ENCODE measurements at regions of chr17 and their contacts with region 1.

Region 1: DNA sequence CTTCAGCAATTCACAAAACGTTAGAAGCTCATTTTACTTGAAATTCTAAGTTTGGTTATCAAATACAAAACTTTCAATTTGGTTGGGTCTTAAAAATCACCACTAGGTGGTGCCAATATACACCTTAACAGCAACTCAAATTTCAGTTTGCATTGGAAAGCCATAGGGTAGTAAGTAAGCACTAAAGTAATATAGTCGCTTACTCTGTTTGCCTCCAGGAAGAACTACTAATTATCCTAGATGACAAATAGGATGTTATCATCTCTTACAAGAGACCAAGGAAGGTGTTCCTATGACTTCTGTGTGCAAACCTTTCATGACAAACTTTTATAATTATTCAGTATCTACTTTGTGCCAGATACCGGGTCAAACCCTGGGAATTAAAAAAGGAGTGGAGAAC is 93.3 kb downstream of the MYO1D start:
- DNase-seq: peak; percentile 67
- ATAC-seq: peak; percentile 36
- H3K4me3 ChIP-seq: no peak overlapping the region
- H3K4me3 Mint-ChIP-seq: no peak overlapping the region
- H3K27ac ChIP-seq: no peak overlapping the region
- H3K27ac Mint-ChIP-seq: no peak overlapping the region
- H3K4me1 ChIP-seq: no peaks in the 10 kb centered on the region
- H3K4me1 Mint-ChIP-seq: no peaks in the 10 kb centered on the region
- H3K27me3 ChIP-seq: no peaks in the 10 kb centered on the region
- H3K27me3 Mint-ChIP-seq: no peaks in the 10 kb centered on the region
- CTCF ChIP-seq: peak; percentile 88

Region 2: DNA sequence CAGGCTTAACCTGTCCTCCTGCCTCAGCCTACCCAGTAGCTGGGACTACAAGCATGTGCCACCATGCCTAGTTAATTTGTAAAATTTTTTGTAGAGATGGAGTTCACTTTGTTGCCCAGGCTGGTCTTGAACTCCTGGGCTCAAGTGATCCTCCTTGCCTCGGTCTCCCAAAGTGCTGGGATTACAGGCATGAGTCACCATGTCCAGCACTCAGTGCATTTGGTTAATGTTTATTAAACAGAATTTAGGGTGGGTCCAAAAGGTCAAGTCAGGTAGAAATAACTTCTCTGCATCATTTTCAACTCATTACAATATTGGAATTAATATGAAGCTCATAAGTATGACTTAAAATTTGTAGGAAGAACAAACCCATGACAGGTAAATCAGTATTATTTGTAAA is 585.6 kb before region 1 on chr17:
- CTCF ChIA-PET with region 1: no interaction called
- POLR2A ChIA-PET with region 1: no interaction called
- intact Hi-C with region 1: no loop called
- DNase-seq: no peak
- ATAC-seq: no peak
- H3K4me3 ChIP-seq: no peak overlapping the region
- H3K4me3 Mint-ChIP-seq: no peak overlapping the region
- H3K27ac ChIP-seq: no peak overlapping the region
- H3K27ac Mint-ChIP-seq: no peak overlapping the region
- H3K4me1 ChIP-seq: no peaks in the 10 kb centered on the region
- H3K4me1 Mint-ChIP-seq: no peaks in the 10 kb centered on the region
- H3K27me3 ChIP-seq: no peaks in the 10 kb centered on the region
- H3K27me3 Mint-ChIP-seq: no peaks in the 10 kb centered on the region
- CTCF ChIP-seq: no peak

Region 3: DNA sequence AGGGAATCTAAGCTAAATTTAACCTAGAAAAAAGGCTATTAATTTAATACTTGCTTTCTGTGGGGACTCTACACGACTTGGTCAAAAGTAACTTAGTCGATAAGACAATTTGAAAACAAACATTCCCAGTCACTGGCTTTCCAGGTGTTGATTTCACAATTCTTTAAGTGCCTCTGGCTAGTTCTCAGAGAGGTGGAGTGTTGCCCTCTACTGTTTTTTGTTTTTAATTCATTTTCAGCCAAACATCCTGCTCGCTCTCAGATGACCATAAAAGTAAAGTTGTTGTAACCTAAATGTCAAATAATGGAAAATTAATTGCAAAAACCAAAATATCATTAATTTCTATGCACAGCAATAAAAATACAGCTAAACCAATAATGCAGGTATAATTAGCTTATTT is 13.8 kb before region 1 on chr17:
- CTCF ChIA-PET with region 1: interaction called, 15 read pairs
- POLR2A ChIA-PET with region 1: no interaction called
- intact Hi-C with region 1: no loop called
- DNase-seq: no peak
- ATAC-seq: no peak
- H3K4me3 ChIP-seq: no peak overlapping the region
- H3K4me3 Mint-ChIP-seq: no peak overlapping the region
- H3K27ac ChIP-seq: no peak overlapping the region
- H3K27ac Mint-ChIP-seq: no peak overlapping the region
- H3K4me1 ChIP-seq: no peaks in the 10 kb centered on the region
- H3K4me1 Mint-ChIP-seq: peaks cover 3% of the 10 kb centered on the region
- H3K27me3 ChIP-seq: no peaks in the 10 kb centered on the region
- H3K27me3 Mint-ChIP-seq: no peaks in the 10 kb centered on the region
- CTCF ChIP-seq: no peak

Region 4: GRCh38 chr17:32794533-32795246 is 11.1 kb after region 1 on chr17:
- CTCF ChIA-PET with region 1: interaction called, 19 read pairs
- POLR2A ChIA-PET with region 1: no interaction called
- intact Hi-C with region 1: no loop called
- DNase-seq: no peak
- ATAC-seq: no peak
- H3K4me3 ChIP-seq: no peak overlapping the region
- H3K4me3 Mint-ChIP-seq: no peak overlapping the region
- H3K27ac ChIP-seq: no peak overlapping the region
- H3K27ac Mint-ChIP-seq: no peak overlapping the region
- H3K4me1 ChIP-seq: no peaks in the 10 kb centered on the region
- H3K4me1 Mint-ChIP-seq: no peaks in the 10 kb centered on the region
- H3K27me3 ChIP-seq: no peaks in the 10 kb centered on the region
- H3K27me3 Mint-ChIP-seq: no peaks in the 10 kb centered on the region
- CTCF ChIP-seq: no peak

Region 5: DNA sequence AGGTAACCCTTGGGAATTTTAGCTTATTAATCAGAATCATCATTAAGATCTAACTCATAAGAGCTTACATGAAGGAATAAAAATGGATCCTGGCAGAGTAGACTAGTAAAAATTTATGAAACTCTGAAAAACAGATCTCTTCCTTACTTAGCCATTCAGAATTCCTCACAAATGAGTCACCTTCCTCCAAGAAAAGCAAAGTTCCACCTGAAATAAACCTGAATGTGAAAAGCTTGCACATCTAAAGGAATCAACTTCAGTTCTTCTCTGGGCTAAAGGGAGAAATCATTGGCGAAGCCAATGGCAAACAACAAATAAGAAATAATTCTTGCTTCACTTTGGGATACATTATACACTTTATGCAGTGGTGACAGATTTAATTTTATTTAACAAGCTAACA is 70.6 kb after region 1 on chr17:
- CTCF ChIA-PET with region 1: interaction called, 19 read pairs
- POLR2A ChIA-PET with region 1: no interaction called
- intact Hi-C with region 1: no loop called
- DNase-seq: no peak
- ATAC-seq: no peak
- H3K4me3 ChIP-seq: no peak overlapping the region
- H3K4me3 Mint-ChIP-seq: no peak overlapping the region
- H3K27ac ChIP-seq: no peak overlapping the region
- H3K27ac Mint-ChIP-seq: no peak overlapping the region
- H3K4me1 ChIP-seq: no peaks in the 10 kb centered on the region
- H3K4me1 Mint-ChIP-seq: no peaks in the 10 kb centered on the region
- H3K27me3 ChIP-seq: no peaks in the 10 kb centered on the region
- H3K27me3 Mint-ChIP-seq: peaks cover 2% of the 10 kb centered on the region
- CTCF ChIP-seq: no peak

Region 6: DNA sequence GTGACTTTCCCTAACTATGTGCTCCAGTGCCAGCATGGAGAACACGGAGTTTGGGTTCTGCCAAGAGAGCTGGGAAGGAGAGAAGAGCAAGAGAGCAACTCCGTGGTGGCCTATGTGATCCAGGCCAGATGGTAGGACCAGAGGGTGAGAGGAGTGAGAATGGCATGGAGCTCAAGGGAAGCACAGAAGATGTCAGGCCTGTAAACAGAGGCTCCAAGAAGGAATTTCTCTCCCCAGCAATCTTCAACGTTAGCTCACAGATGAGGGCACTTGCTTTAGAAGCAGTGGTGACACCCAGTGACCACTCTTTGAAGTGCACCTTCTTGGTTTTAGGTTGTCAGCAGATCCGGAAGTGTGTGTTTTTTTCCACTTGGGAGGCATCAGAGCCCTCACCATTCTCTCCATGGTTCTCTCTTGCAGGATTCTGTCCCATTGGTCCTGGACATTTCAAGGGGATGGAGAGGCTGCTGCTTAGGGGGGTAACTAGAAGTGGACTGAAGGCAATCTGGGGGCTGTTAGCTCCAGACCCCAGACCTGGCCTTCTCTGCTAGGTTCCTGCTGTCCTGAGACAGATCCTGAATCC is 126.3 kb after region 1 on chr17:
- CTCF ChIA-PET with region 1: interaction called, 170 read pairs
- POLR2A ChIA-PET with region 1: no interaction called
- intact Hi-C with region 1: loop called (anchors 1 kb)
- DNase-seq: peak; percentile 76
- ATAC-seq: peak; percentile 85
- H3K4me3 ChIP-seq: no peak overlapping the region
- H3K4me3 Mint-ChIP-seq: no peak overlapping the region
- H3K27ac ChIP-seq: no peak overlapping the region
- H3K27ac Mint-ChIP-seq: no peak overlapping the region
- H3K4me1 ChIP-seq: no peaks in the 10 kb centered on the region
- H3K4me1 Mint-ChIP-seq: peaks cover 3% of the 10 kb centered on the region
- H3K27me3 ChIP-seq: peaks cover 0 to 3% (median 1%) of the 10 kb centered on the region in 4 experiments
- H3K27me3 Mint-ChIP-seq: peaks cover 6% of the 10 kb centered on the region
- CTCF ChIP-seq: peak; percentile 82

Region 7: DNA sequence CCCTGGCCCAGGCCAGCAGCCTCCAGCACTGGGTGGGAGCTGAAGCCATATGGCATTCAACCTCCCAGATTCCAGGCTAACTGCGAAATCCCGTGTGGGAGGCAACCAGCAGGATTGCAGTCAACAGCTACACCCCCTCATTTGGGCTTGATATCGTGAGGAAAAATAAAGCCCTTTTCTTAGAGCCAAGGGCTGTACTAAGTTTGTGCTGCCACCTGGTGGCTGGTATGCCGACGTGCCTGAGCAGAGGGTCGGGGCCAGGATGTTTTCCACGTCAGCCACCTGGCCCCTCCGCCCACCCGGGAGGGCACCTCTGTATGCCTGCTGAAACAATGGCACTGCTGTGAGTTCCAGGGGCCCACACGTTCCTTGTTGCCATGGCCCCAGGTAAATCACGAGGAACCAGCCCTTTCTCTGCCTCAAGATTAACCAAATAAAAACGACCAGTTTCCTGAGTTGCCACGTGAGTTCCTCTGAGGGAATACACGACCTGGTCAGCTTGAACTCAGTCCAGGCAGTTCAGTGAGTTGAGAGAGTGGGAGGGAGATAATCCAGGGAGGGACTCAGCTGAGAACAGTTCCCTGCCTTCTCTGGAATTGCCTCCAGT is 153.4 kb after region 1 on chr17:
- CTCF ChIA-PET with region 1: interaction called, 77 read pairs
- POLR2A ChIA-PET with region 1: no interaction called
- intact Hi-C with region 1: no loop called
- DNase-seq: peak; percentile 67
- ATAC-seq: no peak
- H3K4me3 ChIP-seq: no peak overlapping the region
- H3K4me3 Mint-ChIP-seq: peak overlapping the region; percentile 39
- H3K27ac ChIP-seq: no peak overlapping the region
- H3K27ac Mint-ChIP-seq: no peak overlapping the region
- H3K4me1 ChIP-seq: peaks cover 3 to 7% of the 10 kb centered on the region in 2 donors
- H3K4me1 Mint-ChIP-seq: peaks cover 3% of the 10 kb centered on the region
- H3K27me3 ChIP-seq: peaks cover 0 to 33% (median 9%) of the 10 kb centered on the region in 4 experiments
- H3K27me3 Mint-ChIP-seq: peaks cover 38% of the 10 kb centered on the region
- CTCF ChIP-seq: peak; percentile 77